AG04450 (cell line): ENCODE measurements at regions of chr3 and their contacts with region 1.

Region 1: DNA sequence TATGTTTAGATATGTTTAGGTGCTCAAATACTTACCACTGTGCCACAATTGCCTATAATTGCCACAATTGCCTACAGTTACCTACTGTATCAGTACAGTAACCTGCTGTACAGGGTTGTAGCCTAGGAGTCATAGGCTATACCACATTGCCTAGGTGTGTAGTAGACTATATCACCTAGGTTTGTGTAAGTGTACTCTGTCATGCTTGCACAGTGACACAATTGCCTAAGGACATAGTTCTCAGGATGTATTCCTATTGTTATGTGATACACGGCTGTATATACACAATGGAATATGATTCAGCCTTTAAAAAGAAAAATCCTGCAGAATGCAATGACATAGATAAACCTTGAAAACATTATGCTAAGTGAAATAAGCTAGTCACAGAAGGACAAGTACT is 264.8 kb downstream of the RAP2B start:
- DNase-seq: no peak
- H3K4me3 ChIP-seq: no peak overlapping the region
- H3K27ac ChIP-seq: no peak overlapping the region
- H3K27me3 ChIP-seq: no peaks in the 10 kb centered on the region
- CTCF ChIP-seq: no peak

Region 2: GRCh38 chr3:153463895-153464294 is 37.1 kb after region 1 on chr3:
- CTCF ChIA-PET with region 1: no interaction called
- POLR2A ChIA-PET with region 1: interaction called, 15 read pairs
- DNase-seq: no peak
- H3K4me3 ChIP-seq: no peak overlapping the region
- H3K27ac ChIP-seq: no peak overlapping the region
- H3K27me3 ChIP-seq: no peaks in the 10 kb centered on the region
- CTCF ChIP-seq: no peak

Region 3: DNA sequence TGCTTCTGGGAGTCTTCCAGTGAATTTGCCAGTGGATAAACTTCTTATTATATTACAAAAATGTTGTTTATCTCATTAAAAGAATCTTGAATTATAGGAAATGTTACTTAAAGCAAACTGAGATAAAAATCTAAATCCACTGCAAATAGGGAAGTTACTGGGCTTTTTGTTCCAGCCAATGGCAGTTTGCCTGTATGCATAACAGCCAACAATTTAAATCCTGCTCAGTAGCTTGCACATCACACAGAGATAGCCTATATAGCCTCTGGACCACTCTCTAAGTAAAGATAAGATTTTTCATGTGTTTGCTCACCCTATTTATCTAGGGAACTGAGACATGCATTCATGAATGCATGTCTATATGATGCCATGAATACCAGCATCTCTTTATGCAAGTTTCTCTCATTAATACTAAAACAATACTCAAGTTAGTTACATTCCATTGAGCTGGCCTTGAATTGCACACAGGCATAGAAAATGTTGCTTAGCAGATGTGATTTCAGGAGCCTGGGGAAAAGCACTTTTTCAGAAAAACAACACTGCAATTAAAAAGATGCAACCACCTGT is 1095.3 kb after region 1 on chr3:
- CTCF ChIA-PET with region 1: no interaction called
- POLR2A ChIA-PET with region 1: no interaction called
- DNase-seq: no peak
- H3K4me3 ChIP-seq: no peak overlapping the region
- H3K27ac ChIP-seq: no peak overlapping the region
- H3K27me3 ChIP-seq: no peaks in the 10 kb centered on the region
- CTCF ChIP-seq: no peak